Cardiac septum (tissue), 1 donor: ENCODE measurements at regions of chr12 and their contacts with region 1.

Region 1: GRCh38 chr12:127108360-127109215 is 1158.4 kb upstream of the TMEM132C start:
- DNase-seq: no peak

Region 2: GRCh38 chr12:127293507-127294310 is 185.1 kb after region 1 on chr12:
- intact Hi-C with region 1: loop called (anchors 5 kb)
- DNase-seq: peak; percentile 63

Region 3: DNA sequence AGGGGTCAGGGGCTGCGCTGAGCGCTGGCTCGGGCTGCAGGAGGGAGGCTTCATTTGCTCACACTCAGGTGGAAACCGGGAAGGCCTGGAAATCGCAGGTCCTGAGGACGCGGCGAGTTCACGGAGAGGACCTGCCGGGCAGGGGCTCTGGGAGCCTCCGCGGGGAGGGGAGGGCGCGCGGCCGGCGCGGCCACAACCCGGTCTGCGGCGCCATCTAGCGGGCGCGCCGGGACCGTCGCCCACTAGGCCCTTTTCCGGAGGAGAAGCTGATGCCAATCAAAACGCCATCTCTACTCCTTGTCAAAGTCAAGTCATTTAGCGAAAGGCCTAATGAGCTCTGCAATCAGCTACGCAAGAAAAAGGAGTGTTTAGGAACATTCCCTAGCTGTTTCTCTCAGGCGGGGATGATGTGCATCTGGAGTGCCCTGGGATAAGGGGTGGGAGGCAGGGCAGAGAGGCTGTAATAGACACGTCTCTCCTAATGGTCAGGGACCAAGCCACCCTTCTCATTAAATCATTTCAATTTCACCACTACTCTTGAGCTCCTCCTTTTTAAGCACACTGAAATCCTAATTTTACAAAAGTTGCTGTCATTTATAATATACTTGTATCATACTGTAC is 272.6 kb after region 1 on chr12:
- intact Hi-C with region 1: loop called (anchors 2 kb)
- DNase-seq: no peak